ENCODE measurements at regions of chr17 and their contacts with region 1.

Region 1: GRCh38 chr17:40531051-40531991 is 29.9 kb upstream of the TNS4 start:
- DNase-seq: peak; percentile 44
- H3K4me3 ChIP-seq: no peak overlapping the region
- H3K27ac ChIP-seq: no peak overlapping the region
- H3K4me1 ChIP-seq: peaks cover 0 to 31% (median 29%) of the 10 kb centered on the region in 4 donors
- H3K27me3 ChIP-seq: no peaks in the 10 kb centered on the region
- CTCF ChIP-seq: no peak
- EP300 ChIP-seq: no peak
- POLR2A ChIP-seq: no peak

Region 2: GRCh38 chr17:40113110-40113906 is 418.0 kb before region 1 on chr17:
- intact Hi-C with region 1: no loop called
- DNase-seq: peak; percentile 98
- H3K4me3 ChIP-seq: peak overlapping the region; percentile 8 to 51 (median 43)
- H3K27ac ChIP-seq: peak overlapping the region; percentile 97 to 100 (median 98)
- H3K4me1 ChIP-seq: peaks cover 0 to 66% (median 59%) of the 10 kb centered on the region in 4 donors
- H3K27me3 ChIP-seq: no peaks in the 10 kb centered on the region
- CTCF ChIP-seq: peak; percentile 81 to 98 (median 86)
- EP300 ChIP-seq: peak in 1 of 4 donors; percentile 91
- POLR2A ChIP-seq: peak in 1 of 2 donors; percentile 6

Region 3: GRCh38 chr17:40399185-40399584 is 132.1 kb before region 1 on chr17:
- intact Hi-C with region 1: loop called (anchors 1 kb)
- DNase-seq: no peak
- H3K4me3 ChIP-seq: no peak overlapping the region
- H3K27ac ChIP-seq: no peak overlapping the region
- H3K4me1 ChIP-seq: no peaks in the 10 kb centered on the region
- H3K27me3 ChIP-seq: no peaks in the 10 kb centered on the region
- CTCF ChIP-seq: peak; percentile 44 to 60 (median 52)
- EP300 ChIP-seq: no peak
- POLR2A ChIP-seq: no peak

Region 4: GRCh38 chr17:40417609-40418427 is 113.5 kb before region 1 on chr17 and contains the start of gene TOP2A:
- intact Hi-C with region 1: no loop called
- DNase-seq: peak; percentile 99
- H3K4me3 ChIP-seq: peak within 1 kb of the TSS; percentile 36 to 59 (median 56)
- H3K27ac ChIP-seq: peak within 1 kb of the TSS; percentile 77 to 88 (median 80)
- H3K4me1 ChIP-seq: peaks cover 0 to 17% (median 10%) of the 10 kb centered on the region in 4 donors
- H3K27me3 ChIP-seq: no peaks in the 10 kb centered on the region
- CTCF ChIP-seq: no peak
- EP300 ChIP-seq: no peak
- POLR2A ChIP-seq: no peak
- total RNA-seq, gene TOP2A: 0.33 to 2.3 (median 1.8) TPM

Region 5: GRCh38 chr17:40480501-40481003 is 50.8 kb before region 1 on chr17:
- intact Hi-C with region 1: loop called (anchors 2 kb)
- DNase-seq: no peak
- H3K4me3 ChIP-seq: no peak overlapping the region
- H3K27ac ChIP-seq: no peak overlapping the region
- H3K4me1 ChIP-seq: peaks cover 0 to 14% (median 13%) of the 10 kb centered on the region in 4 donors
- H3K27me3 ChIP-seq: no peaks in the 10 kb centered on the region
- CTCF ChIP-seq: no peak
- EP300 ChIP-seq: no peak
- POLR2A ChIP-seq: no peak

Region 6: DNA sequence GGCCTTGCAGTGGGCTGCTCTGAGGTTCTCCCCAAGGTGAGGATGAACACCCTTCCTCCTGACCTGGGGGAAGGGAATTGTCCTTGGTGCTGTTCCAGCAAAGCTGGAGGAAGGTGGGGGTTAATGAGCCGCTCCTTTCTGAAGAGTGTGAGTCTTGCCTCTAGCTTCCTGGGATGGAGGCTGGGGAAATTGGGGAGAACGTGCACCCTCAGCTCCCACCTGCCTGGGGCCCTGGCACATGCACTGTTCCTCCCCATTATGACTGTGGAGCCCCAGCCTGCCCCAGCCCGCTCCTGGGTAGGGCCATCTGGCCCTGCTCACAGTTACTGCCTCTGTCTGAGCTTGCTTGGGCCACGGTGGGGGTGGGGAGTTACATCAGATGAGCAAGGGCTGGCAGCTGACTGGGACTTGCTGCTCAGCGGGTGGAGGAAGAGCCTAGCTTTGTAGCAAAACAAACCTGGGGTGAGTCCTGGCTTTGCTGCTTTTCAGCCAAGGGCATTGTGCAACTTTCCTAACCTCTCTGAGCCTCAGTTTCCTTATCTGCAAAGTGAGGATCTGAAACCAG is 41.0 kb before region 1 on chr17:
- intact Hi-C with region 1: loop called (anchors 5 kb)
- DNase-seq: peak; percentile 97
- H3K4me3 ChIP-seq: no peak overlapping the region
- H3K27ac ChIP-seq: peak overlapping the region; percentile 72 to 94 (median 85)
- H3K4me1 ChIP-seq: peaks cover 4 to 75% (median 66%) of the 10 kb centered on the region in 4 donors
- H3K27me3 ChIP-seq: no peaks in the 10 kb centered on the region
- CTCF ChIP-seq: no peak
- EP300 ChIP-seq: peak in 3 of 4 donors; percentile 32 to 83 (median 79)
- POLR2A ChIP-seq: peak in 1 of 2 donors; percentile 30

Measured in sigmoid colon (tissue), 7 donors.